ENCODE measurements at regions of chr1 and their contacts with region 1.

Region 1: DNA sequence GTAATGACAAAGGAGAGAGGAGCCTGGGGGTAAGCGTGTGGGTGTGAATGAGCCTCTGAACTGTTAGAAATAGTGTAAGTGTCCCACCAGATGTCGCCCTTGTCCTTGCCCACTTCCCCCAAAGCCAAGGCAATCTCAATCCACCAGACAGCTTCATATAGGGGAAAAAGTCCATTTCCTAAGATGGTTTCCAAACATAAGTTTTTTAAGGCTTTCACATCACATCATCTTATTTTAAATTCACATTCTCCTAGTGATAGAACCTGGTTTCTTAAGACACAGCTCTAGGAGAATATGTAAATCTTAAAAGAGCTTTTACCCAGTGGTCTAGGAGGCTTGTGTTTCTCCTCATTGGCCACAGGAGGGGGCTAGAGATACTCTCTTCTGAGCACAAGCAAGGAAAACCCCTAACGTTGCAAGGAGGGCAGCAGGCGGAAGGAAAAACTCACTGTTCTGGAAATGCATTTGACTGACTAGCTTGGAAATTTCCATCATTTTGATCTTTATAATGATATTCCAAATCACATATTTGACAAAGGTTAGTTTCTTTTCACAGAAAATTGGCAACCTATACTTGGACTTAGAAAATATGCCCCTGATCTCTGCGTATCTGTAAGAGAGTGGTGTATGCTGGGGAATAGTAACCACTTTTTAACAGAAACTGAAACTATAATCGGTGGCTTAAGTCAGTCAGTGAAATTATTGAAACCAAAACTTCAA is 51.9 kb upstream of the LPAR3 start:
- DNase-seq: peak; percentile 48
- ATAC-seq: peak; percentile 92
- H3K4me3 Mint-ChIP-seq: no peak overlapping the region
- H3K27ac Mint-ChIP-seq: peak overlapping the region; percentile 36; the same call in 1 of the 2 replicates
- H3K4me1 Mint-ChIP-seq: peaks cover 26% of the 10 kb centered on the region
- H3K27me3 Mint-ChIP-seq: no peaks in the 10 kb centered on the region
- CTCF ChIP-seq: peak; percentile 66

Region 2: GRCh38 chr1:84781946-84782771 is 162.8 kb before region 1 on chr1:
- CTCF ChIA-PET with region 1: interaction called, 20 read pairs
- POLR2A ChIA-PET with region 1: no interaction called
- DNase-seq: peak; percentile 91
- ATAC-seq: peak; percentile 95
- H3K4me3 Mint-ChIP-seq: peak overlapping the region; percentile 54
- H3K27ac Mint-ChIP-seq: peak overlapping the region; percentile 64
- H3K4me1 Mint-ChIP-seq: peaks cover 15% of the 10 kb centered on the region
- H3K27me3 Mint-ChIP-seq: no peaks in the 10 kb centered on the region
- CTCF ChIP-seq: peak; percentile 80

Region 3: DNA sequence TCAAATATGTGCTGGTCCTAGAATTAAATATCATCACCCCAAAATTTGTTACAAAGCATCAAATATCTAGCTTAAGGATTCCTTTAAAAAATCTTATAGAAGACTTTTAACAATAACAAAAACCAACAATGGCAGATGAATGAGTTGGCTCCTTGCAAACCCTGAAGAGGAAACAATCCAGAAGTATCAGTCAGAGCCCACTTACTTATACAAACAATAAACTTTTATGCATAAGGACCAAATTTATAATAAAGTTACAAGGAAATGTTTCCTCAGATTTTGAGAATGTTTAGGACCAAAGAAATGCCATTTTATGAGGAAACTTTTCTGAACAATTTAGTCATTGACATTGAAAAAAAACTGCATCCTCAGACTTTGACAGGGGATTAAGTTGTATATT is 104.6 kb before region 1 on chr1:
- CTCF ChIA-PET with region 1: no interaction called
- POLR2A ChIA-PET with region 1: no interaction called
- DNase-seq: no peak
- ATAC-seq: no peak
- H3K4me3 Mint-ChIP-seq: no peak overlapping the region
- H3K27ac Mint-ChIP-seq: no peak overlapping the region
- H3K4me1 Mint-ChIP-seq: peaks cover 20% of the 10 kb centered on the region
- H3K27me3 Mint-ChIP-seq: no peaks in the 10 kb centered on the region
- CTCF ChIP-seq: no peak

Region 4: DNA sequence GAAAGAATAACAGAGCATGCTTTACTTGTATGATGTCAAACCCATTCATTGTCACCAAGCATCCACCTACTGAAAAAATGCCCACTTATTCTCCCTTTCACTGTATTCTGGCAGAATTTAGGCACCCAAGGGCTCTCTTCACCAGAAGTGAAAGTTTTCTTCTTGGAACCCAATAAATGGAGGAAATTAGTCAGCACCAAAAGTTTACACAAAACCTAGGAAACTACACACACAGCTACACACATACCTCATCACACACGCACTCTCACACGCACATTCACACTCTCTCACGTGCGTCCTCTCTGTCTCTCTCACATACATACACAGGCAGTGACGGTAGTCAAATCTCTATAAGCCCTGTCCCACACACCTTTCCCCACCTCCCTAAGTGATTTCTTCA is 14.4 kb after region 1 on chr1:
- CTCF ChIA-PET with region 1: interaction called, 35 read pairs
- POLR2A ChIA-PET with region 1: no interaction called
- DNase-seq: no peak
- ATAC-seq: no peak
- H3K4me3 Mint-ChIP-seq: no peak overlapping the region
- H3K27ac Mint-ChIP-seq: no peak overlapping the region
- H3K4me1 Mint-ChIP-seq: no peaks in the 10 kb centered on the region; the same call in 1 of the 2 replicates
- H3K27me3 Mint-ChIP-seq: no peaks in the 10 kb centered on the region; the same call in 1 of the 2 replicates
- CTCF ChIP-seq: no peak

Region 5: DNA sequence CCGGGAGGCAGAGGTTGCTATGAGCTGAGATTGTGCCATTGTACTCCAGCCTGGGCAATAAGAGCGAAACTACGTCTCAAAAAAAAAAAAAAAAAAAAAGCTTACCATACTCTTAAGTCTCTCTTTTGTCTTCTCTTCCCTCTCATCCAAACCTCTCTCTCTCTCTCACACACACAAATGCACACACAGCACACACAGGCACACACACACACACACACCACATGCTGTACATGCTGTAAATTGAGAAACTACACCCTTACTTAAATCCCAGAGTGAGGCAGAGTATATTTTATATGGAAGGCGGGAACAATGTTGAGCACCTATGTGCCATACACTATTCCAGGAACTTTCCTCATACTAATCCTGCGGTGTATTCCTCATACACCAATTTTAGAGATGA is 96.9 kb after region 1 on chr1:
- CTCF ChIA-PET with region 1: interaction called, 15 read pairs
- POLR2A ChIA-PET with region 1: no interaction called
- DNase-seq: no peak
- ATAC-seq: no peak
- H3K4me3 Mint-ChIP-seq: no peak overlapping the region
- H3K27ac Mint-ChIP-seq: no peak overlapping the region
- H3K4me1 Mint-ChIP-seq: peaks cover 13% of the 10 kb centered on the region
- H3K27me3 Mint-ChIP-seq: peaks cover 24% of the 10 kb centered on the region
- CTCF ChIP-seq: no peak

Region 6: DNA sequence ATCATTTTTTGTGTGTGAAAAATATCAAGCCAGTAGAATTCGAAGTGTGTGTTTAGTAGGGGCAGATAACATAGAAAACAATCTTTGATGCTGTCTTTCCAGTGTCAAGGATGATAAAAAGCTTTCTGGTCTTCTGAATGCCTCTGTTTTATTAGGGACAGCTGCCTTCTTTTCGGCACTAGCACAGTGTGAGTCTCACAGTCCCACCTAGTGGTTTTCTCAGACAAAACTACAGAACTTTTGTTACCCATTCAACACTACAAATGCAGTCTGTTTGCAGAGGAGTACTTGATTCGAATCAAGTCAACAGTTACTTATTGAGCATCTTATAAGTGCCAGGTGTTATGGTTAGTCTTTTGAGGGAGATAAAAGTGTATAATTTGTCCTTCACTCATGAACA is 134.0 kb after region 1 on chr1:
- CTCF ChIA-PET with region 1: interaction called, 23 read pairs
- POLR2A ChIA-PET with region 1: no interaction called
- DNase-seq: no peak
- ATAC-seq: peak; percentile 82
- H3K4me3 Mint-ChIP-seq: no peak overlapping the region
- H3K27ac Mint-ChIP-seq: no peak overlapping the region
- H3K4me1 Mint-ChIP-seq: 0 out of 2 replicates have a peak, but pooled peaks cover 2% of the 10 kb centered on the region
- H3K27me3 Mint-ChIP-seq: no peaks in the 10 kb centered on the region
- CTCF ChIP-seq: no peak

Region 7: GRCh38 chr1:85240174-85240601 is 295.3 kb after region 1 on chr1:
- CTCF ChIA-PET with region 1: interaction called, 25 read pairs
- POLR2A ChIA-PET with region 1: interaction called, 3 read pairs
- DNase-seq: peak; percentile 56
- ATAC-seq: peak; percentile 94
- H3K4me3 Mint-ChIP-seq: no peak overlapping the region
- H3K27ac Mint-ChIP-seq: no peak overlapping the region
- H3K4me1 Mint-ChIP-seq: peaks cover 25% of the 10 kb centered on the region
- H3K27me3 Mint-ChIP-seq: no peaks in the 10 kb centered on the region
- CTCF ChIP-seq: no peak